HepG2 (cell line): ENCODE measurements at regions of chr5 and their contacts with region 1.

Region 1: GRCh38 chr5:154072414-154073171 is 33.8 kb downstream of the MFAP3 start:
- DNase-seq: peak; percentile 66
- ATAC-seq: peak; percentile 97
- H3K4me3 ChIP-seq: peak overlapping the region; percentile 6 to 59 (median 32); a peak in 4 of 6 replicates
- H3K27ac ChIP-seq: no peak overlapping the region
- H3K4me1 ChIP-seq: peaks cover 19% of the 10 kb centered on the region; the same call in 1 of the 2 replicates
- H3K27me3 ChIP-seq: no peaks in the 10 kb centered on the region
- CTCF ChIP-seq: peak; percentile 97
- EP300 ChIP-seq: no peak
- POLR2A ChIP-seq: no peak
- RAD21 ChIP-seq: peak; percentile 92

Region 2: DNA sequence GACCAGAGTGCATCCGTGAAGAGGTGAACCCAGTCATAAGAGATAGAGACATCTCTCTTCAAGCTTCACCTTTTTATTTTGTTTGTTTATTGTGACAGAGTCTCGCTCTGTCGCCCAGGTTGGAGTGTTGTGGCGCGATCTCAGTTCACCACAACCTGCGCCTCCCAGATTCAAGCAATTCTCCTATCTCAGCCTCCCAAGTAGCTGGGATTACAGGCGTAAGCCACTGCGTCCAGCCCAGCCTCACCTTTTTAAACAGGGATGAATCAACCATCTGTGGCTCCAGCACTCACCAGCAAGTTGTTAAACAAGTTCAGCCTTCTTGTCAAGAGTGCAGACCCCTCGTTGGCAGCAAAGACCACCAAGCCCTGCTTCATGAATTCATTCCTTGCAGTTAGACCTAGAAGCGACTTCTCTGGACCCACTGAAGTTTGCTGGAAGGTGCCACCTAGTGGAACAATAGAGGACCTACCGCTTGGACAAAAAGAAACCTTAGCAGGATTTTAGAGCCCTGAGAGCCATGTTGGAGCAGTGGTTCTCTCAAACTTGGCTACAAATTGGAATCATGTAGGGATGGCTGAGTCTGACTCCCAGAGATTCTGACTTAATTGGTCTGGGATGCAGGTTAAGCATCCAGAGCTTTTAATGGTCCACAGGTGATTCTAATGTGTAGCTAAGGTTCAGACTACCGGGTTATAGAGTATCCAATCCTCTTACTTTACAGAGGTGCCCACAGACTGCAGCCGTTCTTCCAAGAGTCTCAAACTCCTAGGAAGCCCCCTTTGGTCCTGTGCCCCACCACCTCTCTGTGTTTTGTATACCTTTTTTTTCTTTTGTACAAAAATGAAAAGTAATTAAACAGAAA is 107.5 kb after region 1 on chr5:
- CTCF ChIA-PET with region 1: interaction called, 10 read pairs
- POLR2A ChIA-PET with region 1: no interaction called
- in situ Hi-C with region 1: loop called (anchors 5 kb)
- intact Hi-C with region 1: loop called (anchors 1 kb)
- DNase-seq: peak; percentile 60
- ATAC-seq: peak; percentile 98
- H3K4me3 ChIP-seq: no peak overlapping the region
- H3K27ac ChIP-seq: no peak overlapping the region
- H3K4me1 ChIP-seq: no peaks in the 10 kb centered on the region
- H3K27me3 ChIP-seq: no peaks in the 10 kb centered on the region; a peak in 1 of 5 replicates
- CTCF ChIP-seq: peak; percentile 80
- EP300 ChIP-seq: no peak
- POLR2A ChIP-seq: no peak
- RAD21 ChIP-seq: peak; percentile 37; the same call in 1 of the 2 replicates

Region 3: GRCh38 chr5:154189819-154190594 is 117.4 kb after region 1 on chr5:
- CTCF ChIA-PET with region 1: no interaction called
- POLR2A ChIA-PET with region 1: no interaction called
- in situ Hi-C with region 1: loop called (anchors 5 kb)
- intact Hi-C with region 1: no loop called
- DNase-seq: peak; percentile 61
- ATAC-seq: peak; percentile 86
- H3K4me3 ChIP-seq: peak overlapping the region; percentile 80 to 85 (median 85)
- H3K27ac ChIP-seq: peak overlapping the region; percentile 39
- H3K4me1 ChIP-seq: peaks cover 31% of the 10 kb centered on the region
- H3K27me3 ChIP-seq: peaks cover 0 to 9% of the 10 kb centered on the region in 2 experiments; a peak in 2 of 5 replicates
- CTCF ChIP-seq: no peak
- EP300 ChIP-seq: no peak
- POLR2A ChIP-seq: peak in 1 of 2 experiments; percentile 46; a peak in 1 of 4 replicates
- RAD21 ChIP-seq: 0 out of 2 replicates have a peak, but pooled peaks have one; percentile 18

Region 4: GRCh38 chr5:154196955-154197652 is 124.5 kb after region 1 on chr5:
- CTCF ChIA-PET with region 1: interaction called, 3 read pairs
- POLR2A ChIA-PET with region 1: no interaction called
- in situ Hi-C with region 1: no loop called
- intact Hi-C with region 1: loop called (anchors 2 kb)
- DNase-seq: peak; percentile 46
- ATAC-seq: peak; percentile 68
- H3K4me3 ChIP-seq: no peak overlapping the region
- H3K27ac ChIP-seq: no peak overlapping the region
- H3K4me1 ChIP-seq: peaks cover 37% of the 10 kb centered on the region
- H3K27me3 ChIP-seq: no peaks in the 10 kb centered on the region
- CTCF ChIP-seq: peak; percentile 45
- EP300 ChIP-seq: no peak
- POLR2A ChIP-seq: no peak
- RAD21 ChIP-seq: no peak

Region 5: DNA sequence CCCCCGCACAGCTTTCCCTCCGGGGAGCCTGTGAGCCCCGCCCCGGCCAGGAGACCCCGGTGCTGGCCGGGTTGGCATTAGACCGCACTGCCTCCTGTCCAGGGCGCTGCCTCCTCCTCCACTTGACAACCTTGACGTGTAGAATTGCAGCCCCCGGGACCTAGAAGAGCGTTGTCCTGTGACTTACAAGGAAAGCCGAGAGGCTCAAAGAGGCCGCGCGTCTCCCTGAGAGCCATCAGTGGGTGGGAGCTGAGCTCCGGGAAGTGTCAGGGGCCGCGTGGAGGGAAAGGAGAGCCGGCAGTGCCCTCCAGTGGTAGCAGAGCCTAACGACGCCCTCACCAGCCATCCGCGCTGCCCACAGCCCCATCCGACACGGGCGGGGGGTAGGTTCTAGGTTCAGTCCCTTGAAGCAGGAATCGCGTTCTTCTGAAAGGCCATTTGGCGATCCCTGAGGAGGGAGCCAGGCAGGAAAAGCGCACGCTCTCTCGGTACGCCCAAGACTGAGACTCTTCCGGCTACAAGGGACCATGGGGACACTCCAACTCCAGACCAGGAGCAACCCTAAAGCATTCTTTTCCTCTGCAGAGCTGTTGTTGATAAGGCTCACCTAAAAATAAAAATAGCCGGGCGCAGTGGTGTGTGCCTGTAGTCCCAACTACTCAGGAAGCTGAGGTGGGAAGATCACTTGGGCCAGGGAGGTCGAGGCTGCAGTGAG is 332.6 kb after region 1 on chr5:
- CTCF ChIA-PET with region 1: interaction called, 18 read pairs
- POLR2A ChIA-PET with region 1: interaction called, 7 read pairs
- in situ Hi-C with region 1: loop called (anchors 5 kb)
- intact Hi-C with region 1: loop called (anchors 1 kb)
- DNase-seq: peak; percentile 59
- ATAC-seq: peak; percentile 99
- H3K4me3 ChIP-seq: peak overlapping the region in 1 of 3 experiments; percentile 62; a peak in 3 of 6 replicates
- H3K27ac ChIP-seq: no peak overlapping the region
- H3K4me1 ChIP-seq: 0 out of 2 replicates have a peak, but pooled peaks cover 9% of the 10 kb centered on the region
- H3K27me3 ChIP-seq: no peaks in the 10 kb centered on the region
- CTCF ChIP-seq: peak; percentile 99
- EP300 ChIP-seq: no peak
- POLR2A ChIP-seq: no peak
- RAD21 ChIP-seq: peak; percentile 99

Region 6: GRCh38 chr5:154467655-154468354 is 395.2 kb after region 1 on chr5:
- CTCF ChIA-PET with region 1: no interaction called
- POLR2A ChIA-PET with region 1: no interaction called
- in situ Hi-C with region 1: no loop called
- intact Hi-C with region 1: loop called (anchors 5 kb)
- DNase-seq: peak; percentile 31
- ATAC-seq: peak; percentile 96
- H3K4me3 ChIP-seq: peak overlapping the region in 1 of 3 experiments; percentile 23; a peak in 1 of 6 replicates
- H3K27ac ChIP-seq: no peak overlapping the region
- H3K4me1 ChIP-seq: peaks cover 54% of the 10 kb centered on the region
- H3K27me3 ChIP-seq: peaks cover 2 to 29% of the 10 kb centered on the region in 2 experiments; a peak in 3 of 5 replicates
- CTCF ChIP-seq: peak; percentile 88
- EP300 ChIP-seq: no peak
- POLR2A ChIP-seq: no peak
- RAD21 ChIP-seq: peak; percentile 67; the same call in 1 of the 2 replicates

Region 7: DNA sequence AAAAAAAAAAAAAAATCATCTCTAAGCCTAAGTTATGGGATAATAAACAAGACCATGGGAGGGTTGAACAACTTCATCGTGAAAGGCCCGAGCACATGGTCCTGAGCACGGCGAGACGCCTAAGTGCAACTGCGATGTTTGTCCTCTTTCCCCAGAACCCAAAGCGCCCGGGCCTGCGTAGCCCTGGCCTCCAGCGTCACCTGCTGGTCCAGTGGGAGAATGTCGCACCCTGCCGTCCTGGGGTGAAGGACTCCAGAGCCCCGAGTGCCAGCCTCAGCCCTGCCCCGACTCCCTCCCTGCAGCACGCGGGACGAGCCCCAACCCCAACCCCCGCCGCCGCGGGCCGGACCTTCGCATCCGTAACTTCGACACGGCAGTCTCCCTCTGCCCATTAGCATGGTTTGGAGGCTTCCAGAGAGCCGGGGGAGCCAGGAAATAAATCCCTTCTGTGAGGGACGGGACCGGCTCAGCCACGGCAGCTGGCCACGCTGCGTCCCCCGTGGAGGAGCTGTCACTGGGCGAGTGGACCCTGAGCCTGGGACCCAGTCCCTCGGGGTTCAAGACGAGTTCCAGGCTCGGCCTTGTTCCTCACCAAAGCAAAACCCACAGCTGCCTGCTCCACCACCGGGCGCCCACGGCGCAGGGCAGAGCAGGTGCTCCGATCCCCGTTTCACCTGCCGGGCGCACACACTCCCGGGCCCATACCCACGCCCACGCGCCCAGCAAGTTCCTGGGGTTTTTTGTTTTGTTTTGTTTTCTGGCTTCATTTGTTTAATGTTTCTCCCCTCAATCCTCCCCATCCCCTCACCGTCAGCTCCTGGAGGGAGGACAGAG is 537.9 kb after region 1 on chr5:
- CTCF ChIA-PET with region 1: interaction called, 8 read pairs
- POLR2A ChIA-PET with region 1: no interaction called
- in situ Hi-C with region 1: loop called (anchors 25 kb)
- intact Hi-C with region 1: loop called (anchors 1 kb)
- DNase-seq: peak; percentile 55
- ATAC-seq: peak; percentile 98
- H3K4me3 ChIP-seq: peak overlapping the region in 2 of 3 experiments; percentile 10 to 59; a peak in 3 of 6 replicates
- H3K27ac ChIP-seq: no peak overlapping the region
- H3K4me1 ChIP-seq: peaks cover 12% of the 10 kb centered on the region
- H3K27me3 ChIP-seq: peaks cover 1 to 56% of the 10 kb centered on the region in 2 experiments; a peak in 4 of 5 replicates
- CTCF ChIP-seq: peak; percentile 98
- EP300 ChIP-seq: no peak
- POLR2A ChIP-seq: no peak
- RAD21 ChIP-seq: peak; percentile 96